ENCODE measurements at regions of chr11 and their contacts with region 1.

Region 1: DNA sequence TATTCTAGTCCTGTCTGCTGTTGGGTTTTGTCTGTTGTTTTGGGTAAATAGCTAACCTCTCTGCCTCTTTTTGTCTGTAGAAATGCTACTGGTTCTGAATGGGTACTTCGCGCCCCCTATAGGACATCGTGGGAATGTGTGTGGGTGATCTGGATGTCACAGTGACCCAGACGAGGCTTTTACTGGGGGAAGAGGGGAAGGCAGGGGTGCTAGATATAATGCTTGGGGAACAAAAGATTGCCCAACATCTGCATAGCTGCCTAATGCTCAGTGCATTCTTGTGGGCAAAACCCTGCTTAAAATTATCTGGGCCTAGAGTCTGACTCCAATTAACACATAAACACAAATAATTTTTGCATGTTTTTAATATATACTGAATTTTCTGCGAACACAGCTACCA is 57.7 kb downstream of the BMAL1 start:
- DNase-seq: no peak
- H3K4me3 ChIP-seq: no peak overlapping the region
- H3K27ac ChIP-seq: no peak overlapping the region
- H3K27me3 ChIP-seq: no peaks in the 10 kb centered on the region
- CTCF ChIP-seq: peak; percentile 86

Region 2: GRCh38 chr11:13183094-13183825 is 152.1 kb before region 1 on chr11:
- CTCF ChIA-PET with region 1: interaction called, 13 read pairs
- POLR2A ChIA-PET with region 1: interaction called, 4 read pairs
- DNase-seq: no peak
- H3K4me3 ChIP-seq: peak overlapping the region; percentile 42
- H3K27ac ChIP-seq: no peak overlapping the region
- H3K27me3 ChIP-seq: no peaks in the 10 kb centered on the region
- CTCF ChIP-seq: peak; percentile 54

Region 3: GRCh38 chr11:13216019-13216710 is 119.2 kb before region 1 on chr11:
- CTCF ChIA-PET with region 1: interaction called, 106 read pairs
- POLR2A ChIA-PET with region 1: interaction called, 19 read pairs
- DNase-seq: peak; percentile 87
- H3K4me3 ChIP-seq: peak overlapping the region; percentile 23; the same call in 1 of the 2 replicates
- H3K27ac ChIP-seq: peak overlapping the region; percentile 100
- H3K27me3 ChIP-seq: no peaks in the 10 kb centered on the region
- CTCF ChIP-seq: no peak

Region 4: GRCh38 chr11:13278614-13279486 is 56.5 kb before region 1 on chr11:
- CTCF ChIA-PET with region 1: interaction called, 24 read pairs
- POLR2A ChIA-PET with region 1: no interaction called
- DNase-seq: no peak
- H3K4me3 ChIP-seq: peak overlapping the region; percentile 83
- H3K27ac ChIP-seq: no peak overlapping the region
- H3K27me3 ChIP-seq: peaks cover 7% of the 10 kb centered on the region
- CTCF ChIP-seq: no peak

Region 5: DNA sequence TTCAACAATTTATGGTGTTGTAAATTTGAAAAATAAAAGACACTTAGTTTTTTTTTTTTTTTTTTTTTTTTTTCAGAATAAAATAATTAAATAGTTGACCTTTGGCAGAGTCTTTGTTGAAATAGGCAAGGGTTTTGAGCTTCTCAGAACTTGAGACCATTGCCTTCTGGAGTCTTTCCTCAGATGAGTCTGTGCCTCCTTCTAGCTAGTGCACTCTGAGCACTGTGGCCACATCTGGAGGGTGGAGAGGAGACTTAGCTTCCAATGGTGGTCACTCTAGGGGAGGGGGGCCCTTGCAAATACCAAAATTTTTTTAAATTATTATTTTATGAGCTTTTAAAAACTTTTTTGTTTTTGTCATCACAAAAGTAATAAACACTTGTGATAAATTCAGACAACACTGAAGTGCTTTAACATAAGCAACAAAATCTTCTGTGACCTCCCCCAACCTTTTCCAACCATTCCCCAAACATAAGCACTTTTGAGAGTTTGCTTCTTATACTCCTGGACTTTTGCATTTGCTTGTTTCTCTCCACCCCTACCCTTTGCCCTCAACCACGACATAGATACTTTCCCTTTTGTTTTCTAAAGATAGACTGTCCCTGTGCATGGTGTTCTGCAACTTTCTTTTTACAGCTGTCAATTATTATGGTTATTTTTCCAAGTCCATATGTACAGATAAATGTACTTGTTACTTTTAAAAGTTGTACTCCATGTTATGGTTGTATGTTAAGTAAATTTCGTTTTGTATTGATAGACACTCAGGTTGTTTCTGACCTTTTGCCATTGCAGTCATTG is 16.6 kb before region 1 on chr11:
- CTCF ChIA-PET with region 1: interaction called, 26 read pairs
- POLR2A ChIA-PET with region 1: interaction called, 3 read pairs
- DNase-seq: no peak
- H3K4me3 ChIP-seq: no peak overlapping the region
- H3K27ac ChIP-seq: no peak overlapping the region
- H3K27me3 ChIP-seq: no peaks in the 10 kb centered on the region
- CTCF ChIP-seq: no peak

Region 6: DNA sequence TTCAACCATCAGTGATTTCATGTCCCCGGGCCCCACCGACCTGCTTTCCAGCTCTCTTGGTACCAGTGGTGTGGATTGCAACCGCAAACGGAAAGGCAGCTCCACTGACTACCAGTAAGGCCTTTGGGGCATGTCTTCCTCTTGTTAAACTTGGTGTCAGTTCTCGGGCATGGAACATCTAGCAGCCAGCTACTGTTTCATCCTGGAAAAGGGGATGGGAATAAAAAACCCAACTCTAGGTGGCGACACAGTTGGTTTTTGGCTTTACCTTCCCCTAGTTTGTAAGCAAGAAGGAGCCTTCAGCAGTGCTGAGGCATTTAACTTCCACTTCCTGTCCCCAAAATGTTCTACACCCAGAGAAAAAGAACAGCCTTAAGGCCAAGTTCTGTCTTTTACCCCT is 19.0 kb after region 1 on chr11:
- CTCF ChIA-PET with region 1: interaction called, 12 read pairs
- POLR2A ChIA-PET with region 1: no interaction called
- DNase-seq: no peak
- H3K4me3 ChIP-seq: no peak overlapping the region
- H3K27ac ChIP-seq: no peak overlapping the region
- H3K27me3 ChIP-seq: no peaks in the 10 kb centered on the region
- CTCF ChIP-seq: peak; percentile 40

Region 7: DNA sequence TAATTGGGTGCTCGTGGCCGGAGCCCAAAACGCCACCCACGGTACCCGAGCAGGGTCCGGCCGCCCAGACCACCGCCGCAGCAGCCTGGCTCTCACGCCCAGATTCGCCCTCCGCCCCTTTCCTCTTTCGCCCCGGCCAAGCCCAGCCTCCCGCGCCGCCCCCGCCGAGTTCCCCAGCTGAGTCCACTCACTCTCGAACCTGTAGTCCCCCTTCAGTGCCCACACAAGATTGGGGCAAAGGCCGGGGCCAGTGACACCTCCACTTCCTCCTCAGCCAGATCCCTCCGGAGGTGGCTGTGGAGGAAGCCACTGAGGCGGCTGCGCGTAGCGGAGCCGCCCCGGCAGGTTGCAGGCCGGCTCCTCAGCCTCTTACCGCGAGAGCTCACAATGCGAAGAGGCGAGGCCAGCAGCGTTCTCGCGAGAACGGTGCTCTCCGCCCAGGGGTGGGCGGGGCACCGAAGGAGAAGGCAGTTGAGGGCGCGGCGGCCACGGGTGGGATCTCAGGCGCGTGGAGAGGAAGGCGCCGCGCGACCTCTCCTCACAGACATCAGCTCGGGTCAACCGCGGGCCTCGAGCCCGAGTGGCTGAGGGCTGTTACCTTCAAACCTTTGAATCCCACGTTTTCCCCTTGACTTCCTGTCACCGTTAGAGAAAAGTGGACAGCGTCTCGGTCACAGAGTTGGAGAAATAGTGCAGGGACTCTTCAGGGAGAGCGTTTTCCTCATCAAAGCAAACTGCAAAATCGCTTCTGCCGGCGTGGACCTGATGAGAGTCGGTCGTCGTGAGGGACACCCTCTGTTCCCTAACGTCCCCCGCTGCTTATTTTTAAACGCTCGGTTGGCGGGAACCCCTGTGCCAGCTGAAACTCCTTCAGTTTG is 127.8 kb after region 1 on chr11 and contains the start of gene BTBD10:
- CTCF ChIA-PET with region 1: no interaction called
- POLR2A ChIA-PET with region 1: no interaction called
- DNase-seq: peak; percentile 88
- H3K4me3 ChIP-seq: peak within 1 kb of the TSS; percentile 86
- H3K27ac ChIP-seq: peak within 1 kb of the TSS; percentile 72
- H3K27me3 ChIP-seq: peaks cover 6% of the 10 kb centered on the region
- CTCF ChIP-seq: no peak
- polyA plus RNA-seq, gene BTBD10: 50.2 and 60.8 TPM in 2 replicates

Measured in AG04450 (cell line).